Natural killer cell (primary cell): ENCODE measurements at regions of chr10 and their contacts with region 1.

Region 1: DNA sequence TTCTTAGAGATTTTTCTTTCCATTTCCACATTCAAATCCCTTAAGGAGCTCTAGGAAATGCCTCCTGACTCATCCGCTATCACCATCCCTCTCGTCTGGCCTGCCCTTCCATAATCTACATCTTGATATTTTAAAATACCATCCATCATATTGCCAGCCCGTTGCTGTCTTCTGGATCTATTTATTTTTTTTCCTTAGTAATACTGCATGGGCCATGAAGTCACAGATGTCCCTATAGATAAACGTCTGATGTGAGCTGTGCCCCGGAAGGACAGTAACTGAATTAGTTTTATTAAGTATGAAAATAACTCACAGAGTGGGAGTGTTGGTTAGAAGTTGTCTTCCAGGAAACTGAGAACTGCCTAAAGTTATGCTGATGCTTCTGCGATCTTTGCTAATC is 76.2 kb downstream of the KLF6 start:
- DNase-seq: no peak
- ATAC-seq: no peak
- H3K4me3 ChIP-seq: no peak overlapping the region
- H3K4me3 Mint-ChIP-seq: no peak overlapping the region
- H3K27ac ChIP-seq: no peak overlapping the region
- H3K27ac Mint-ChIP-seq: no peak overlapping the region
- H3K4me1 ChIP-seq: no peaks in the 10 kb centered on the region
- H3K4me1 Mint-ChIP-seq: no peaks in the 10 kb centered on the region
- H3K27me3 ChIP-seq: no peaks in the 10 kb centered on the region
- H3K27me3 Mint-ChIP-seq: peaks cover 0 to 3% of the 10 kb centered on the region in 2 donors
- CTCF ChIP-seq: no peak

Region 2: GRCh38 chr10:2772816-2773631 is 935.8 kb before region 1 on chr10:
- intact Hi-C with region 1: loop called (anchors 10 kb)
- DNase-seq: no peak
- ATAC-seq: no peak
- H3K4me3 ChIP-seq: no peak overlapping the region
- H3K4me3 Mint-ChIP-seq: no peak overlapping the region
- H3K27ac ChIP-seq: no peak overlapping the region
- H3K27ac Mint-ChIP-seq: no peak overlapping the region
- H3K4me1 ChIP-seq: no peaks in the 10 kb centered on the region
- H3K4me1 Mint-ChIP-seq: no peaks in the 10 kb centered on the region
- H3K27me3 ChIP-seq: no peaks in the 10 kb centered on the region
- H3K27me3 Mint-ChIP-seq: peaks cover 0 to 5% of the 10 kb centered on the region in 2 donors
- CTCF ChIP-seq: no peak

Region 3: GRCh38 chr10:3619241-3619640 is 89.6 kb before region 1 on chr10:
- intact Hi-C with region 1: no loop called
- DNase-seq: no peak
- ATAC-seq: no peak
- H3K4me3 ChIP-seq: no peak overlapping the region
- H3K4me3 Mint-ChIP-seq: no peak overlapping the region
- H3K27ac ChIP-seq: no peak overlapping the region
- H3K27ac Mint-ChIP-seq: no peak overlapping the region
- H3K4me1 ChIP-seq: no peaks in the 10 kb centered on the region
- H3K4me1 Mint-ChIP-seq: peaks cover 8 to 9% of the 10 kb centered on the region in 2 donors
- H3K27me3 ChIP-seq: no peaks in the 10 kb centered on the region
- H3K27me3 Mint-ChIP-seq: peaks cover 10 to 22% of the 10 kb centered on the region in 2 donors
- CTCF ChIP-seq: no peak